Activated CD4-positive, alpha-beta T cell treated with anti-CD3 and anti-CD28 coated beads, Interleukin-2, amount 10 ng/mL, durations not matched to agents 24 days and 14 days (primary cell): ENCODE measurements at regions of chr15 and their contacts with region 1.

Region 1: GRCh38 chr15:99424978-99425656 is 140.7 kb upstream of the MEF2A start:
- DNase-seq: peak; percentile 86
- H3K4me3 Mint-ChIP-seq: peak overlapping the region; percentile 29
- H3K27ac Mint-ChIP-seq: peak overlapping the region; percentile 88
- H3K4me1 Mint-ChIP-seq: peaks cover 49% of the 10 kb centered on the region
- H3K27me3 Mint-ChIP-seq: peaks cover 4% of the 10 kb centered on the region

Region 2: GRCh38 chr15:99282121-99282520 is 143.0 kb before region 1 on chr15:
- intact Hi-C with region 1: loop called (anchors 5 kb)
- DNase-seq: peak; percentile 27
- H3K4me3 Mint-ChIP-seq: no peak overlapping the region
- H3K27ac Mint-ChIP-seq: peak overlapping the region; percentile 48
- H3K4me1 Mint-ChIP-seq: peaks cover 39% of the 10 kb centered on the region
- H3K27me3 Mint-ChIP-seq: no peaks in the 10 kb centered on the region

Region 3: DNA sequence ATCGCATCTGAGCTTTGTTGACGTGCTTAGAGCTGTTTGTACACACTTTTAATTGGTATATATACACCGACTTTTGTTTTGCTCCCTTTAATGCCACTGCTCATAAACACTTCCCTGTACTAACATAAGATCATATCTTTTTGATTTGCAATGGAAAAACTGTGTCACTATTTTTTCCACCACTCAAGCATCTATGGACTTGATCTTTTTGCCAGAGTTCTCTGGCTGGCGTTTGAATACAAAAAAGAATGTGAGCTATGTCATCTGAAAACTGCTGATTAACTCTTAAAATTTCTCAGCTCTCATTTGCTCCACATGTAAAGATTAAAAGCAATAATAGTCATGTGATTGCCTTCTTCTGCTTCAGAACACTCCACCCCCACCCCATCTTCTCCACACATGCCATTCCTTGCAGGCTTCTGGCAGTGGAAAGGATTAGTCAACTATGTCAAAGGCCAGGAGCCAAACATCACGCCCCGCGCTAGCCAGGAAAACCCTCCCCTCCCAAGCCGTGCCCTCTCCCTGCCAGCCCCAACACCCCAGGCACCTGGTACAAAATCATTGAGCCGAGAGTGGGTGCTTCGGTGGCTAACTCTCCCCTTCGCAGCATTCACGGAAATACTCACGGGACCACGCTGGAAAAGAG is 17.3 kb after region 1 on chr15:
- intact Hi-C with region 1: loop called (anchors 2 kb)
- DNase-seq: no peak
- H3K4me3 Mint-ChIP-seq: peak overlapping the region; percentile 5
- H3K27ac Mint-ChIP-seq: peak overlapping the region; percentile 69
- H3K4me1 Mint-ChIP-seq: peaks cover 32% of the 10 kb centered on the region
- H3K27me3 Mint-ChIP-seq: peaks cover 2% of the 10 kb centered on the region

Region 4: DNA sequence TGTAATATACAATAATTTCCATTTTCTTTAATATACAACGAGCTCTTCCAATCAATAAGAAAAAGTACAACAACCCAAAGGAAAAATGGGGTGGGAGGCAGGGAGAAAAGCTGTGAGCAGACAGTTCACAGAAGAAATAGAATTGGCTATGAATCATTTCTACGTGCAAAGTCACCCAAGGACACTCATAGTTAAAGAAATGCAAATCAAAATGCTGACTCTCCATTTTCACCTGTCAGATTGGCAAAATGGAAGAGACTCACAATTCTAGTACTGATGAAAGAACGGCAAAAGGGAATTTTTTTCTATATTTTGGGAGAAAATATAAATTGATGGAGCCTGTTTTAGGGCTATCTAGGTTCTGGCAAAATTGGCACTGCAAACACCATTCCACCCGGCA is 24.4 kb after region 1 on chr15:
- intact Hi-C with region 1: loop called (anchors 1 kb)
- DNase-seq: no peak
- H3K4me3 Mint-ChIP-seq: no peak overlapping the region
- H3K27ac Mint-ChIP-seq: no peak overlapping the region
- H3K4me1 Mint-ChIP-seq: peaks cover 45% of the 10 kb centered on the region
- H3K27me3 Mint-ChIP-seq: peaks cover 2% of the 10 kb centered on the region